ENCODE measurements at regions of chr1 and their contacts with region 1.

Region 1: GRCh38 chr1:169601093-169601881 is 15.0 kb upstream of the F5 start:
- DNase-seq: no peak
- ATAC-seq: peak; percentile 81
- H3K4me3 ChIP-seq: no peak overlapping the region
- H3K27ac ChIP-seq: no peak overlapping the region
- H3K4me1 ChIP-seq: peaks cover 0 to 35% of the 10 kb centered on the region in 2 donors
- H3K27me3 ChIP-seq: no peaks in the 10 kb centered on the region
- CTCF ChIP-seq: peak; percentile 55 to 58

Region 2: DNA sequence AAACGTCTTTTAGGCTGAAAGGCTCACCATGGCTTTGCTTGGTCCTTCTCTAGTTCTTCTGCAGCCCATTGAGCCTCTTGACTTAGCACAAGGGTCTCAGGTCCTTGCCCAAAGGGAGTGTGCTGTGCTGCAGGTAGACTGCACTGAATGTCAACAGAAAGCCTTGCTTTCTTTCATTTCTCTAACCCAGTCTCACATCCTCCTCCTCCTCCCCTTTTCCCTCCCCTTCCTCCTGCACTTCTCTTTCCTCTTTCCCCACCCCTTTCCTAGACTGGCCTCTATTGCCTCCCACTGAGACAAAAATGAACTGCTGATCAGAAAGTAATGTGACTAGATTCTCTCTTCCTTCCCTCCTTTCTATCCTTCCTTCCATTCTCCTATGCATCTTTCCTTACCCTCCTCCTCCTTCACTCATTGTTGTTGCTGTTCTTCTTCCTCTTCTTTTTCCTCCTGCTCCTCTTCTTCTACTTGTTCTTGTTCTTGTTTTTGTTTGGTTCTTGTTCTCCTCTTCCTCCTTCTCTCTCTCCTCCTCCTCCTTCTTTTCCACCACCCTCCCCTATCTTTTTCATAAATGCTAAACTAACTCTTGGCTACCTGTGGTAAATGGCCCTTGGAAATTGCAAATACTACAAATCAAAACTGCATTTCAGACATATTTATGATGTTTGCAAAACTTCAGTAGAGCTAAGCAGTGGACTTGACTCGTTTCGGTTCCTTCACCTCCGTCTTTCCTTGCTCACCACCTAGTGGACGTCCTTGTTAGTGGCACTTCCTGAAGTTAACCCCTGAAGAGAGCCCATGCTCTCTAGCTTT is 110.4 kb after region 1 on chr1 and contains the start of gene SELL:
- intact Hi-C with region 1: loop called in 1 of 2 experiments (anchors 5 kb)
- DNase-seq: peak in 3 of 4 donors; percentile 30 to 65 (median 47)
- ATAC-seq: peak; percentile 100
- H3K4me3 ChIP-seq: peak within 1 kb of the TSS; percentile 13 to 34
- H3K27ac ChIP-seq: peak within 1 kb of the TSS; percentile 39 to 75
- H3K4me1 ChIP-seq: peaks cover 0 to 26% of the 10 kb centered on the region in 2 donors
- H3K27me3 ChIP-seq: no peaks in the 10 kb centered on the region
- CTCF ChIP-seq: peak; percentile 62 to 84
- polyA plus RNA-seq, gene SELL: 2.6 to 4.5 (median 3.6) TPM